MCF 10A (cell line): ENCODE measurements at regions of chr14 and their contacts with region 1.

Region 1: GRCh38 chr14:24710403-24711112 is 76.6 kb upstream of the GZMB start:
- DNase-seq: peak; percentile 44
- H3K4me3 Mint-ChIP-seq: no peak overlapping the region
- H3K27ac Mint-ChIP-seq: no peak overlapping the region
- H3K4me1 Mint-ChIP-seq: no peaks in the 10 kb centered on the region
- H3K27me3 Mint-ChIP-seq: no peaks in the 10 kb centered on the region
- CTCF ChIP-seq: peak; percentile 76

Region 2: GRCh38 chr14:24699052-24699451 is 11.5 kb before region 1 on chr14:
- CTCF ChIA-PET with region 1: interaction called, 29 read pairs
- POLR2A ChIA-PET with region 1: no interaction called
- intact Hi-C with region 1: no loop called
- DNase-seq: no peak
- H3K4me3 Mint-ChIP-seq: no peak overlapping the region
- H3K27ac Mint-ChIP-seq: no peak overlapping the region
- H3K4me1 Mint-ChIP-seq: no peaks in the 10 kb centered on the region
- H3K27me3 Mint-ChIP-seq: no peaks in the 10 kb centered on the region
- CTCF ChIP-seq: no peak

Region 3: GRCh38 chr14:24734878-24735500 is 24.4 kb after region 1 on chr14:
- CTCF ChIA-PET with region 1: interaction called, 21 read pairs
- POLR2A ChIA-PET with region 1: no interaction called
- intact Hi-C with region 1: no loop called
- DNase-seq: peak; percentile 17
- H3K4me3 Mint-ChIP-seq: no peak overlapping the region
- H3K27ac Mint-ChIP-seq: no peak overlapping the region
- H3K4me1 Mint-ChIP-seq: no peaks in the 10 kb centered on the region
- H3K27me3 Mint-ChIP-seq: no peaks in the 10 kb centered on the region
- CTCF ChIP-seq: peak; percentile 55

Region 4: GRCh38 chr14:24911324-24912109 is 201.0 kb after region 1 on chr14:
- CTCF ChIA-PET with region 1: no interaction called
- POLR2A ChIA-PET with region 1: no interaction called
- intact Hi-C with region 1: no loop called
- DNase-seq: no peak
- H3K4me3 Mint-ChIP-seq: peak overlapping the region; percentile 3
- H3K27ac Mint-ChIP-seq: no peak overlapping the region
- H3K4me1 Mint-ChIP-seq: peaks cover 11% of the 10 kb centered on the region
- H3K27me3 Mint-ChIP-seq: no peaks in the 10 kb centered on the region
- CTCF ChIP-seq: no peak

Region 5: GRCh38 chr14:25150934-25151790 is 440.6 kb after region 1 on chr14:
- CTCF ChIA-PET with region 1: interaction called, 27 read pairs
- POLR2A ChIA-PET with region 1: no interaction called
- intact Hi-C with region 1: loop called (anchors 5 kb)
- DNase-seq: peak; percentile 1
- H3K4me3 Mint-ChIP-seq: no peak overlapping the region
- H3K27ac Mint-ChIP-seq: no peak overlapping the region
- H3K4me1 Mint-ChIP-seq: no peaks in the 10 kb centered on the region
- H3K27me3 Mint-ChIP-seq: no peaks in the 10 kb centered on the region
- CTCF ChIP-seq: peak; percentile 69

Region 6: DNA sequence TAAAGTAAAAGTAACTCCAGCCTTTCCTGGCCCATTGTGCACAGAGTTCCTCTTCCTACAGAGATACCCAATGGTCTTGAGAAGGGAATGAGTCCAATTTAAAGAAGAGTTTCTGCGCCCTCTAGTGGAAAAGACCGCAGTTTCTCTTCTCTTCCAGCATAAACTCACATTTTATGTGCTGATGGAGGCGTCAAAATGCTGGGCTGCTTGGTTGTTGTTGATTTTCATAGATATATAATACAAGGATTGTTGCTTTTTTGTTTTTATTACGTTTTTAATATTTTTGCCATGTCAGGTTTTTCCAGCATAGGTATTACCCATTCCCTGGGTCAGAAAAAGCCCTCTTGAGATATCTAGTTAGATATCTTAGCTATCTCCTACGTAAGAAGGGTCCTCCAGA is 696.3 kb after region 1 on chr14:
- CTCF ChIA-PET with region 1: interaction called, 10 read pairs
- POLR2A ChIA-PET with region 1: no interaction called
- intact Hi-C with region 1: no loop called
- DNase-seq: no peak
- H3K4me3 Mint-ChIP-seq: no peak overlapping the region
- H3K27ac Mint-ChIP-seq: no peak overlapping the region
- H3K4me1 Mint-ChIP-seq: no peaks in the 10 kb centered on the region
- H3K27me3 Mint-ChIP-seq: peaks cover 28% of the 10 kb centered on the region
- CTCF ChIP-seq: peak; percentile 37

Region 7: GRCh38 chr14:25602106-25602505 is 891.5 kb after region 1 on chr14:
- CTCF ChIA-PET with region 1: no interaction called
- POLR2A ChIA-PET with region 1: no interaction called
- intact Hi-C with region 1: no loop called
- DNase-seq: no peak
- H3K4me3 Mint-ChIP-seq: no peak overlapping the region
- H3K27ac Mint-ChIP-seq: no peak overlapping the region
- H3K4me1 Mint-ChIP-seq: no peaks in the 10 kb centered on the region
- H3K27me3 Mint-ChIP-seq: no peaks in the 10 kb centered on the region
- CTCF ChIP-seq: no peak